ENCODE measurements at regions of chr5 and their contacts with region 1.

Region 1: DNA sequence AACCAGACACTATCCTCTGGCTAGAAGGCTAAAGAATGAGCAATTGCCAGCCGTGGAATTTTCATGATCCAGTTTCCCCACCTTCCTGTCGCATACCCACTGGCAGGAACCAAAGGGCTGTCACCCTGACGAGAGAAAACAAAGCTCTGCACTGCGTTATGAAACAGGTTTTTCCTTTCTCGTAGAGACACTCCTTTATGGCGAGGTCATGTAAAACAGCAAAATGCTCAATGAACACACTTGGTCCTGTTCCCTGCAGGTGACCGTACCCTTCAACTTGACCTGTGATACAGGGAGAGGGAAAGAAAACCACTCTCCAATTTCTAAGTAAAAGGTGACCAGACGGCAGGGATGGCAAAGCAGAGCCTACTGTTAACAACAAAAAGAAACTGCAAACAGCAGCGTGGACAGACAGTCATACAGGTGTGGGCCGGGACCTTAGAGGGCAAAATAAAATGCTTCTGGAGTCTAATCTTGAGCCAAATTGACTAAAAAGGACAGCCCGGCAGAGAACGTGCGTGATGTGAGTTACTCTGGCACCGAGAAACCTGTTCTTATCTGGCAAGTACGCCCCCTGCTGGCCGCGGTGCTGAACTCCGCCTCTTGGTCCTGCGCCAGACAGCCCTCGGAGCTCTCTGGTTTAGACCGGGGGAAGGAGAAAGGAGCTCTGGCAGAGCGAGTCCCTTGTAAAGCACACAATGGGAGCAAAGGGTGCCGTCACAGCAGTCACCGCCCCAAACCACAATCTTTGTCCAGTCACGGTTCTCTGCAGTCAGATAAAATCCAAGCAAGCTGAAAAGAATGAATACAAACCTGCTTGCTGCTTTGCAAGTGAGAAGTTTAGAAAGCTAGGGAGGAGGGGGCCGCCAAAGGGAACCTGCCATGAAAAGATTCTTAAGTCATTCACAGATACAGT is 98.9 kb downstream of the EFNA5 start:
- DNase-seq: peak; percentile 90 to 94
- ATAC-seq: peak; percentile 88 to 97 (median 90)
- H3K4me3 ChIP-seq: peak overlapping the region; percentile 63
- H3K27ac ChIP-seq: peak overlapping the region; percentile 73
- H3K4me1 ChIP-seq: peaks cover 3% of the 10 kb centered on the region
- H3K27me3 ChIP-seq: peaks cover 0 to 2% (median 0%) of the 10 kb centered on the region in 3 donors
- CTCF ChIP-seq: peak; percentile 97

Region 2: DNA sequence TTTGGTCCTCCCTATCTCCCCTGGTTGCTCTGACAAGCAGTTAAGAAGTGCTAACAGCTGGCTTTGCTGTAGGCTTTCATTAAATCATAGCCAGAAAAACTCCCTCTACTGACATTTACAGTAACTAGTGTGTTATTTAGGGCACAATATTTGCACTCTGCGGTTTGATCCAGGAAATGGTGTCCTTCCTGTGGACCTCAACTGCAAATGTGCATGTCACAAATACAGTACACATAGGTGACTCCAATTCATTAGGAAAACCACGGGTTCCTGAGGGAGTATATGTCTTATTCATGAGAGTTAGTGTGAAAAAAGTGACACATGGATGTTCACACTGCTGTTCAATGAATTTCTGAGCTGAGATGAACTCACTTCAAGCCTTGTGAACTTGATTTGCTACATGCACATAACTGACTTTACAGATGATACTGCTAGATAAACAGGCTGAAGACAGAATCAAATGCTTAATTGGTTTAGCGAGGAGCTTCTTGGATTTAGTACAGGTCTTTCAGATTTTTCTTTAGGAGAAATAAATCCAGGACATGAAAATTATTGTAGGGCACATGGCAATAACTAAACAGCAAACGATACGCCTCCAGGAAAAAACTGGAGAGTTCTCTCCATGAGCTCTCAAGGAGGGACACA is 182.6 kb before region 1 on chr5:
- intact Hi-C with region 1: loop called in 1 of 2 experiments (anchors 5 kb)
- DNase-seq: no peak
- ATAC-seq: peak; percentile 65 to 90 (median 85)
- H3K4me3 ChIP-seq: no peak overlapping the region
- H3K27ac ChIP-seq: peak overlapping the region; percentile 65
- H3K4me1 ChIP-seq: peaks cover 21% of the 10 kb centered on the region
- H3K27me3 ChIP-seq: no peaks in the 10 kb centered on the region
- CTCF ChIP-seq: no peak

Region 3: DNA sequence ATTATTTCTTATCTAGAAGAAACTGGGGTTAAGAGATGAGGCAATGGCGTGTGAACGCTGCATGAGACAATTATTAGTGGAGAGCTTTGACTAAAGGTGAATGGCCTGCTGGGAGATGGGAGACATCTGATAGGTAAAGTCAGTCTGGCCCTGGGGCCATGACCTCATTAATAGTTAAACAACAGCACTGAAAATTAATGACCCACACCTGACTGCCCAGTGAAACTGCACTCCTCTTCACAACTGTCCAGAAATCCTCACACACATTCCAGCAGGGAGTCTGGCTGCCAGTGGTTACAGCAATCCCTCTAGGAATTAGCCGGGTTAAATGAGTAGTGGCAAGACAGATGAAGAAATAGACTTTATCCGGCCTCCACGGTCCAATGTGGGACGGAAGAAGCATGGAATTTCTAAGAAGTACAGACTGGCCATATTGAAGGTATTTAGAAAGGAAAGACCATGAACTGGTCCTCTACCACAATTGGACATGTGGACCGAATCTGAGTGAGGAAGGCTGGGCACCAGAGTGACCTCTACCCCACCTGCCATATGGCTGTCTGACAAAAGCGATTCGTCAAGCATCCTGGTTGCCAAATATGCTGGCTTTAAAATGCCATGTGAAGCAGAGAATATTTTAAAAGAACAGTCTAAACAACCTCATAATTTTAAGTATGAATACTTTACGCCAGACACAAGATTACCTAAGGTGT is 39.6 kb before region 1 on chr5:
- intact Hi-C with region 1: no loop called
- DNase-seq: no peak
- ATAC-seq: peak; percentile 56 to 86 (median 77)
- H3K4me3 ChIP-seq: no peak overlapping the region
- H3K27ac ChIP-seq: no peak overlapping the region
- H3K4me1 ChIP-seq: peaks cover 4% of the 10 kb centered on the region
- H3K27me3 ChIP-seq: peaks cover 0 to 2% (median 0%) of the 10 kb centered on the region in 3 donors
- CTCF ChIP-seq: no peak

Measured in psoas muscle (tissue), 8 donors.